ENCODE measurements at regions of chr9 and their contacts with region 1.

Region 1: DNA sequence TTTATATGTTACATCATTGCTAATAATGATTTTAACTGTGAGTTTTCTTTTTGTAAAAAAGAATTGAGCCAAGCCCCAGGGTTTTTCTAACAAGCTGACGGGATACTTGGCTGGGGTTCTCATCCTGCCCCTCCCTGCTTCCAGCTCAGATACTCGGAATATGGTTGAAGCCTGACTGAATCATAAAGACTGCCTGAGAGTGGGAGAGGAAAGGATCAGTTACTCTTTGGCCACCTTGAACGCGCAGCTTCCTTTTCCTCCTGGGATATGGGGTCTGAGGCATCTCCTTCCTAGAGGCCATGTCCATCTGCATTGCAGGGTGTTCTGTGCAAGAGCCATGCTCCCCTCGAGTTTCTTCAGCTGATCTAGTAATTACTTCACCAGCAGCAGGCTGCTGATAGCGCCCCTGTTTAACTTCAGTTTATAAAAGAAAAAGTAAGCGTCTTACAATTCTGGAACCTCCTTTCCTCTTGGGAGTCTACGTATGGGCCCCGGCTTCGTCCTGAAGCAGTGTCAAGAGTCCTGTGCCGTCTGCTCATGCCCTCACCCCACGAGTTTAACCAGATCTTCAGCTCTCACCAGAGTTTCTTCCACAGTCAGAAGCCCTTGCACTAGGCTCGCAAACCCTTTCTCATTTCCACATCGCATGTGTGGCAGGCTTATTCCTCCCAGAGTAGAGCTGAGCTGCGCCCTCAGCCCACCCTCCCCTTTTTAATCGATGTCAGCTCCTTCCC is 130.0 kb downstream of the MVB12B start:
- DNase-seq: no peak
- CTCF ChIP-seq: no peak

Region 2: DNA sequence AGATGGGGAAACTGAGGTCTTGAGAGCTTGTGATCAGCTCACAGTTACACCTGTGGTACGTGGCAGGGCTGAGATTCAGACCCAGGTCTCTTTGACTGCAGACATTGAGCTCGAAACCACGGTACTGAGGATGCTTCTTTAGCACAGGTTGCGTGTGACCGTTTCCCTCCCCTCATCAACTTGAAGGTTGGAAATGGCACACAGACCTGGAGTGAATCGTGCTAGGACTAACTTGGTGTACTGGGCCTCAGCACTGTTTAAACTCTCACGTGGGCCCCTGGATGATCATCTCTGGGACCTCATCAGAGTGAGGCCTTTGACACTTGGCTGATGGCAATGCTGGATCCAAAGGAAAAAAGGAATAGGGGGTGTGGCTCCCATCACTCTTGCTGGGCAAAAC is 23.9 kb before region 1 on chr9:
- CTCF ChIA-PET with region 1: no interaction called
- POLR2A ChIA-PET with region 1: interaction called, 10 read pairs
- DNase-seq: no peak
- CTCF ChIP-seq: no peak

Region 3: GRCh38 chr9:126443144-126443543 is 13.5 kb before region 1 on chr9:
- CTCF ChIA-PET with region 1: no interaction called
- POLR2A ChIA-PET with region 1: no interaction called
- DNase-seq: no peak
- CTCF ChIP-seq: no peak

Measured in GM10248 (cell line).